ENCODE measurements at regions of chr1 and their contacts with region 1.

Region 1: GRCh38 chr1:31705080-31705866 is 1.5 kb upstream of the COL16A1 start:
- DNase-seq: peak; percentile 72 to 89 (median 89)
- ATAC-seq: peak; percentile 49 to 52
- H3K4me3 ChIP-seq: peak overlapping the region; percentile 4
- H3K27ac ChIP-seq: peak overlapping the region; percentile 32
- H3K4me1 ChIP-seq: peaks cover 13% of the 10 kb centered on the region
- H3K27me3 ChIP-seq: no peaks in the 10 kb centered on the region

Region 2: DNA sequence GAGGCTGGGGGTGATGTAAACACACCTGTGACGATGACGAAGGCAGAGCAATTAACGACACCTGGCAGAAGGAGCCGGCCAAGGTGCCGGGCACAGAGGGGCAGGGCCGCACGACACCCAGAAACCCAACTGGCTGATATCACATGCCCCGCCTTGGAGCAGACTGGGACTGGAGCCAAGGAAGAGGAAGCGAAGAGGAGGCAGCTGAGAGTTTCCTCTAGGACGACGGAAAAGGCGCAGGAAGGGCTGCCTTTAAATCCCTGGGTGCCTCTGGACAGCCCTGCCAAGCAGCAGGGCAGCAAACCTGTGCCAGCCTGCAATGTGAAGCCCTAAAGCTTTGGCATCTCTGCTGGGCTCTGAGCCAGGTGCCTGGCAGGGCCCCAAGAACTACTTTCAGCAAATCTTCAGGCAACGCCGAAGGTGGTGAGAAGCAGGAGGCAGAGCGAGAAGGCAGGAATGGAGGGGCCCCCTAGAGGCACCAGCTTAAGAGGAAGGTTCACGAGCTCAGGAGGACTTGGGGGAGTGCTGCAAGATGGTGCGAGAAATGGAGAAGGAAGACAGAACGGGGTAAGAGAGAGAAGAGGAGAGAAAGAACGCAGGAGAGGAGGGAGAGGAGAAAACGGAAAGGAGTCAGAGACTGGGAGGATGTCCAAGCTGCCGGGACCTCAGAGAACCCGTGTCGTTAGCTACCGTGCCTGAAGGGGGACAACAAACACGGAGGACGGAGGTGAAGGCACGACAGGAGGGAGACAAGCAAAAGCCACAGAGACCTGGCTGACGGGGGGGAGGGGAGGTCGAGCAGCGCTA is 35.3 kb before region 1 on chr1:
- intact Hi-C with region 1: loop called (anchors 5 to 10 kb)
- DNase-seq: peak; percentile 77 to 90 (median 89)
- ATAC-seq: peak; percentile 54 to 63
- H3K4me3 ChIP-seq: peak overlapping the region; percentile 5
- H3K27ac ChIP-seq: peak overlapping the region; percentile 57
- H3K4me1 ChIP-seq: peaks cover 23% of the 10 kb centered on the region
- H3K27me3 ChIP-seq: no peaks in the 10 kb centered on the region

Region 3: GRCh38 chr1:32172621-32173245 is 467.5 kb after region 1 on chr1:
- intact Hi-C with region 1: no loop called
- DNase-seq: no peak
- ATAC-seq: no peak
- H3K4me3 ChIP-seq: no peak overlapping the region
- H3K27ac ChIP-seq: no peak overlapping the region
- H3K4me1 ChIP-seq: no peaks in the 10 kb centered on the region
- H3K27me3 ChIP-seq: no peaks in the 10 kb centered on the region

Measured in right cardiac atrium (tissue), 5 donors.